Activated naive CD4-positive, alpha-beta T cell treated with anti-CD3 and anti-CD28 coated beads for 36 hours (primary cell): ENCODE measurements at regions of chr13 and their contacts with region 1.

Region 1: DNA sequence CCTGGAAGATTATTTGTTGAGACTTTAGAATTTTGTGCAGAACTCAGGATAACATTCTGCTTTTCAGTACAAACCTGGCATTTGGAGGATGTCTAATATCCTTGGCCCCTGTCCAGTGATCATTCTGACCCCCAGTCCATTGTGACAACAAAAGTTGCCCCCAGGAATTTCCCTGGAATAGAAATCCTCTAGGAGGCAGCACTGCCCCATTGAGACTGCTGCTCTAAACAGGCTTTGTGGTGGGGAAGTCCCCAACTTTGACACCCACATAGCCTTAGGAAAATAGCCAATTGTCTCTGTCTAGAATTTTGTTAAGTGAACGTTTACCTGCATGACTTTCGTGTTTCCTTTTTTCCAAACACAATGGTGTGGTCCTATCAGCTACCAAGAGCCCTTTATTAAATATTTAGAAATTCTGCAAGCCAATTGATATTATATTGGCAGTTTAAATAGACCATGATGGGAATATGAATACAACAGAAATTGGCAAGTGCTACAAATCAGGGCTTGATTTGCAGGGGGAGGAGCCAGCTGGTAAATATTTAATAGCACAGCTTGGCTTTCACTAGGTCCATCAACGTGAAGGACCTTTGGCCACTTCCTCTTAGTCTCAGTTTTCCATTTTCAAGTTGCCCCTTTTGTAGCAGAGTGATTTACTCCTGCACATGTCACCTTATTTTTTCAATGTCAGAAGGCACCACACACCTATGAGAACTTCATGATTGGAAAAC is 451.7 kb downstream of the EFNB2 start:
- DNase-seq: peak; percentile 19
- H3K4me3 Mint-ChIP-seq: no peak overlapping the region
- H3K27ac Mint-ChIP-seq: no peak overlapping the region
- H3K4me1 Mint-ChIP-seq: no peaks in the 10 kb centered on the region
- H3K27me3 Mint-ChIP-seq: peaks cover 5% of the 10 kb centered on the region

Region 2: DNA sequence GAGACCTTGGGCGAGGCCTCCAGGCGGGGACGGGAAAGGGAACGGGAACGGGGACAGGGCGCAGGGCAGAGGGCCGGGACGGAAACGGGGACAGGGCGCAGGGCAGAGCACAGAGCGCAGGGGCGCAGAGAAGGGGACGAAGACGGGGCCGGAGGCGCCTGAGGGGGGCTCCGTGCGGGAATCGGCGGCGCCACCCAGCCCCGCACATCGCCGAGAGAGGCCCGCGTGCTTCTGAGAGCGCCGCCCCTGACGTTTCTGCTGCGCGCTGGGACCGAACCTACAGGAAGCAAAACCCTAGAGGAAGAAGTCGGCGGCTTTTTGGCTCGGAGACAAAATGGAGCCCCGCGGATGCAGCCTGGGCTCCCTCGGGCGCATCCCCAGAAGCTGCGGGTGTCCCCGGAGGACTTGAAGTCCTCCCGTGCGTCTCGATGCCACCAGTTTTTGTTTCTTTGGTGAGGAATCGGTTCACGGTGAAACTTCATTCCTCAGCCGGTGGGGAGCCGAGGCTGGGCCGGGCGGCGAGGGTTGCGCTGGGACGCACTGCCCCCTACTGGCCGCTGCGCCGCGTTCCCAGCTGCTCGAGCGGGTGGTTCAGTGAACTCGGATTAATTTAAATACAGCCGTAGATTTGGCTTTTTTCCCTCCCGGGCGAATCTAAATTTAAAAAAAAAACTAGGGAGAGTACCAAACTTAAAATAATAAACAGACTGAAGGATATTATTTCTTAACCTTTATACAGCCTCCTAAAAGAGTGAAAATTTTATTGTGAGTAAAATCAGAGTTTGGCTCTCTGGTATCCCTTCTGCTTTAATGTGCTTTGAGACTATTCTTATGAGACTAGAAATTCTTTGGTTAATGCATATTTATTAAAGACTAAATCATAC is 834.1 kb after region 1 on chr13:
- CTCF ChIA-PET with region 1: no interaction called
- intact Hi-C with region 1: loop called (anchors 2 kb)
- DNase-seq: peak; percentile 73
- H3K4me3 Mint-ChIP-seq: peak overlapping the region; percentile 72
- H3K27ac Mint-ChIP-seq: no peak overlapping the region
- H3K4me1 Mint-ChIP-seq: peaks cover 7% of the 10 kb centered on the region
- H3K27me3 Mint-ChIP-seq: peaks cover 44% of the 10 kb centered on the region

Region 3: DNA sequence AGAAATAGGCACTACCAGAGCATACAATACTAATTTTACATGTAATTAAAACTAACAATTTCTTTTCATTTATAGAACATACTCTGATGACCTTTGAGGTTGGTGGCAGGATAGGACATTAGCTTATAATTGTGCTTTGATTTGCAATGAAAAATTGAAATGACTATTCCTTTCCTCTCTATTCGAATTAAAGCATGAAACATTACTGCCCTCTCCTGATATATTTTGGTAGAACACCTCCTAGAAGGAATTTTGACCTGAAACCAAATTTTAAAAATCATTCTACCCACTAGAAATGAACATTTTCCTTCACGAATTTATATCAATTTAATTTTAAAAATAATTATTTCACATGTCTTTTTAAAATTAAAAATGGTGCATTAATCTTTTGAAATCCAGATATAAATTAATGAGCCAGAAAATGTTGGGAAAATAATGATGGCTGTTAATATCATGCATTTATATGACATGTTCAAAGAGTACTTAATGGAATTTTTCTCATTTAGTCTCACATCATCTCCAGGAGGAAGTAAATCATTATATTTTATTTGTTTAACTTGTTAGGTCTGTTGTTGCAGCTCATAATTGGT is 1040.4 kb after region 1 on chr13:
- CTCF ChIA-PET with region 1: no interaction called
- intact Hi-C with region 1: loop called (anchors 10 kb)
- DNase-seq: no peak
- H3K4me3 Mint-ChIP-seq: no peak overlapping the region
- H3K27ac Mint-ChIP-seq: no peak overlapping the region
- H3K4me1 Mint-ChIP-seq: no peaks in the 10 kb centered on the region
- H3K27me3 Mint-ChIP-seq: no peaks in the 10 kb centered on the region